Caco-2 (cell line): ENCODE measurements at regions of chr9 and their contacts with region 1.

Region 1: DNA sequence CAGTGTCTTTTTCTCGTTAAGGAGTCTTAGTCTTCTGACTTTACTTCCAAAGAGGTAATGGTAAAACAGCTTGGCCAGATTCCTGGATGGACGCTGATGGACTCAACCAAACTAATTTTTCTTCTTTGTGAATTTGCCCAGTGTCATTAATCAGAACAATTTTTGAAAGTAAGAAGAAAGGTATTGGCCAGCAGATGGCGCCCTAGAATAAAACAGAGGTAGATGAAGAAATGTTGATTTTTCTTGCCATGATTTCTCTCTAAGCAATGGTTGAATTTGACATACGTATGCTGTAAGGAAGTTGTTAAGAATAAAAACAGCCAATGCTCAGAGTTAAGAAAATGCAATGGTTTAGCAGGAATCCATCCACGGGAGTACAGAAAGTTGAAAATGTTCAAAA is 500.0 kb downstream of the DIRAS2 start:
- DNase-seq: peak; percentile 25 to 30
- H3K4me3 ChIP-seq: no peak overlapping the region
- H3K4me3 Mint-ChIP-seq: no peak overlapping the region
- H3K27ac Mint-ChIP-seq: no peak overlapping the region
- H3K4me1 ChIP-seq: no peaks in the 10 kb centered on the region
- H3K4me1 Mint-ChIP-seq: no peaks in the 10 kb centered on the region
- H3K27me3 ChIP-seq: no peaks in the 10 kb centered on the region
- H3K27me3 Mint-ChIP-seq: no peaks in the 10 kb centered on the region
- CTCF ChIP-seq: no peak

Region 2: DNA sequence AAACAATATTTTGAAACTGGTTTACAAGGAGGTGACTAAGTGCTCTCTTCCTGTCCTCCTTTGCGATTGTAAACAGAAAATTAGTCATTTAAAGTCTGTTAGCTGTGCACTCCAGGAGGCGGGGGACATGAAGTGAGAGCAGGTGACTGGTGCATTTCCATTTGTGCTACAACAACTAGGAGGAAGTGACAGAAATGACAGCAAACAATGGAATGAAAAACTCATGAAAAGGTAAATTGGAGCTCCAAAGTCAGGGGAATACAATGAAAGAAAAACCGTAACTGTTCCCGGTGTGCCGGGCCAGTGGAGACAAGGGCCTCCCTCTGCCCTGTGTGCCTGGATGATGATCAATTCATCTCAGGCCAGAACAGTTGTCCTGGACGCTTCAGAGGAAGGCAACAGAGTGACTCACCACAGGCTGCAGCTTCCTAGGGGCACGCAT is 97.8 kb before region 1 on chr9:
- CTCF ChIA-PET with region 1: no interaction called
- POLR2A ChIA-PET with region 1: no interaction called
- intact Hi-C with region 1: no loop called
- DNase-seq: no peak
- H3K4me3 ChIP-seq: no peak overlapping the region
- H3K4me3 Mint-ChIP-seq: no peak overlapping the region
- H3K27ac Mint-ChIP-seq: no peak overlapping the region
- H3K4me1 ChIP-seq: no peaks in the 10 kb centered on the region
- H3K4me1 Mint-ChIP-seq: peaks cover 8% of the 10 kb centered on the region
- H3K27me3 ChIP-seq: no peaks in the 10 kb centered on the region
- H3K27me3 Mint-ChIP-seq: peaks cover 2% of the 10 kb centered on the region
- CTCF ChIP-seq: no peak

Region 3: DNA sequence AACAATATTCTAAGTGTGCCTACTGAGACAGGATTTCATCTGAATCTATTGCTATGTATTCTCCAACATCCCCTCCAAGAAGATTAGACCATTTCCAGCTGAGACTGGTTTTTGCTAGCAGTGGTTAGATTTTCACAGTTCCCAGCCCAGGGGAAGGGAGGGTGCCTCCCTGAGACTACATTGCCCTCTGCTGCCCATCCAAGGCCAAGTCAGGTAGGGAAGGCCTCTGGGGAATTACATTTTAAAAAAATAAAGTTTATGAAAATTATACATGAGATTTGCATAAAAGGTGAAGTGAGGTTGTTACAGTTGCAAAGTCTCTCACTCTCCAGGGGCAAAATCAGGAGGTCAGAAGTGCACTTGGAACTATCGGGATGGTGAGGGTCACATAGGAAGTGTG is 631.0 kb after region 1 on chr9:
- CTCF ChIA-PET with region 1: no interaction called
- POLR2A ChIA-PET with region 1: no interaction called
- intact Hi-C with region 1: loop called (anchors 5 kb)
- DNase-seq: no peak
- H3K4me3 ChIP-seq: no peak overlapping the region
- H3K4me3 Mint-ChIP-seq: no peak overlapping the region
- H3K27ac Mint-ChIP-seq: no peak overlapping the region
- H3K4me1 ChIP-seq: no peaks in the 10 kb centered on the region
- H3K4me1 Mint-ChIP-seq: no peaks in the 10 kb centered on the region
- H3K27me3 ChIP-seq: no peaks in the 10 kb centered on the region
- H3K27me3 Mint-ChIP-seq: no peaks in the 10 kb centered on the region
- CTCF ChIP-seq: peak in 1 of 2 experiments; percentile 31

Region 4: DNA sequence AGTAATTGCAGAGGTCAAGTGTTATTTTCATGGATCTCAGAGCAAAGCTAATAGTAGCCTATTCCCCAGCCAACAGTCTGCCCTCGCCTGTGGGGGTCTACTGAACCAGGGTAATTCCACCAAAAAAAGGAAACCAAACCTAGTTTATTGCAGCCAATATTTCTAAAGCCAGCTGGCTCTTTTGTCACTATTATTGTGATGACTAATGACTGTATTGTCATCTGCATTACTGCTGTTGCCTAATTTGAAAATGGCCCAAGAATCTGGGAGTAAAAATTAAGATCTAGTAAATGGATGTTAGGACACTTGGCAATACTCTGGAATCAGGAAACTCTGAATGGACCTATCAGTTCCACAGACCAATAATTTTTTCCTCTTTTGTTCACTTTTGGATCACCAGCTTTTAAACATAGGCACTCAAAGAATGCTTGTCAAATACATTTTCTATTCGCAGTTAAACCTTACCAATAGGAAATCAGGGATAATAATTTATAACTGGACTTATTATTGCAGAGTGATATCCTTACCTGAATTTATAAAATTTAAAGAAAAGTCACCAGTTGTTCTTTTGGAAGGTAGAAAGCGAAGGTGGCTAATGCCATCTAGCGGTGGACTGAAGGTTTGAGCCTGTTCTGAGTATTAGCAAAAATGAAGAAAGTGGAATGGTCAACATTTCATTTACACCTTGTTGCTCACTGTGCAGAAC is 728.2 kb after region 1 on chr9:
- CTCF ChIA-PET with region 1: no interaction called
- POLR2A ChIA-PET with region 1: no interaction called
- intact Hi-C with region 1: loop called (anchors 5 kb)
- DNase-seq: peak in 1 of 2 experiments; percentile 18
- H3K4me3 ChIP-seq: no peak overlapping the region
- H3K4me3 Mint-ChIP-seq: no peak overlapping the region
- H3K27ac Mint-ChIP-seq: no peak overlapping the region
- H3K4me1 ChIP-seq: no peaks in the 10 kb centered on the region
- H3K4me1 Mint-ChIP-seq: no peaks in the 10 kb centered on the region
- H3K27me3 ChIP-seq: no peaks in the 10 kb centered on the region
- H3K27me3 Mint-ChIP-seq: no peaks in the 10 kb centered on the region
- CTCF ChIP-seq: peak; percentile 56 to 65